Activated CD8-positive, alpha-beta T cell treated with anti-CD3 and anti-CD28 coated beads for 36 hours (primary cell): ENCODE measurements at regions of chr12 and their contacts with region 1.

Region 1: GRCh38 chr12:22100958-22101748 is 55.1 kb downstream of the CMAS start:
- DNase-seq: peak; percentile 69
- ATAC-seq: peak; percentile 77
- H3K4me3 Mint-ChIP-seq: no peak overlapping the region
- H3K27ac Mint-ChIP-seq: no peak overlapping the region
- H3K4me1 Mint-ChIP-seq: peaks cover 12% of the 10 kb centered on the region
- H3K27me3 Mint-ChIP-seq: no peaks in the 10 kb centered on the region
- CTCF ChIP-seq: no peak

Region 2: GRCh38 chr12:22014783-22015144 is 86.4 kb before region 1 on chr12:
- CTCF ChIA-PET with region 1: no interaction called
- POLR2A ChIA-PET with region 1: no interaction called
- intact Hi-C with region 1: no loop called
- DNase-seq: no peak
- ATAC-seq: no peak
- H3K4me3 Mint-ChIP-seq: no peak overlapping the region
- H3K27ac Mint-ChIP-seq: no peak overlapping the region
- H3K4me1 Mint-ChIP-seq: no peaks in the 10 kb centered on the region
- H3K27me3 Mint-ChIP-seq: peaks cover 4% of the 10 kb centered on the region
- CTCF ChIP-seq: no peak

Region 3: DNA sequence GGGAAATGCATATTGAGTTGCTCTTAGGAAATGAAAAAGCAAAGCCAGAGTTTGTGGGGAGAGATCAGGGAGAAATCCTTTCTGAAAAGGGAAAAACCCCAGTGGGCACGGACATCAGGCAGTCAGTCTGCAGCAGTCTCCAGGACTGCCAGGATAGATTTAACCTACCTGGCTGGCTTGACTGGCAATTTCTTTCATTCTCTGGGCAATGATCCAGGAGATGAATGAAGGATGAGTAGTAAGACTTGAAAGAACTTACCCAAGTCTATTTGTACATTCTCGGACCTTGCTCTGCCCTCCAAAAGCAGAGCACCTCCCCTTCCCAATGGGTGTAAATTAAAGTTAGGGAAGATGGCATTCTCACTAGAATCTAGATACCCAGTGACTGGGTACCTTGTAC is 12.3 kb before region 1 on chr12:
- CTCF ChIA-PET with region 1: interaction called, 11 read pairs
- POLR2A ChIA-PET with region 1: no interaction called
- intact Hi-C with region 1: no loop called
- DNase-seq: no peak
- ATAC-seq: no peak
- H3K4me3 Mint-ChIP-seq: no peak overlapping the region
- H3K27ac Mint-ChIP-seq: no peak overlapping the region
- H3K4me1 Mint-ChIP-seq: no peaks in the 10 kb centered on the region
- H3K27me3 Mint-ChIP-seq: no peaks in the 10 kb centered on the region
- CTCF ChIP-seq: no peak

Region 4: DNA sequence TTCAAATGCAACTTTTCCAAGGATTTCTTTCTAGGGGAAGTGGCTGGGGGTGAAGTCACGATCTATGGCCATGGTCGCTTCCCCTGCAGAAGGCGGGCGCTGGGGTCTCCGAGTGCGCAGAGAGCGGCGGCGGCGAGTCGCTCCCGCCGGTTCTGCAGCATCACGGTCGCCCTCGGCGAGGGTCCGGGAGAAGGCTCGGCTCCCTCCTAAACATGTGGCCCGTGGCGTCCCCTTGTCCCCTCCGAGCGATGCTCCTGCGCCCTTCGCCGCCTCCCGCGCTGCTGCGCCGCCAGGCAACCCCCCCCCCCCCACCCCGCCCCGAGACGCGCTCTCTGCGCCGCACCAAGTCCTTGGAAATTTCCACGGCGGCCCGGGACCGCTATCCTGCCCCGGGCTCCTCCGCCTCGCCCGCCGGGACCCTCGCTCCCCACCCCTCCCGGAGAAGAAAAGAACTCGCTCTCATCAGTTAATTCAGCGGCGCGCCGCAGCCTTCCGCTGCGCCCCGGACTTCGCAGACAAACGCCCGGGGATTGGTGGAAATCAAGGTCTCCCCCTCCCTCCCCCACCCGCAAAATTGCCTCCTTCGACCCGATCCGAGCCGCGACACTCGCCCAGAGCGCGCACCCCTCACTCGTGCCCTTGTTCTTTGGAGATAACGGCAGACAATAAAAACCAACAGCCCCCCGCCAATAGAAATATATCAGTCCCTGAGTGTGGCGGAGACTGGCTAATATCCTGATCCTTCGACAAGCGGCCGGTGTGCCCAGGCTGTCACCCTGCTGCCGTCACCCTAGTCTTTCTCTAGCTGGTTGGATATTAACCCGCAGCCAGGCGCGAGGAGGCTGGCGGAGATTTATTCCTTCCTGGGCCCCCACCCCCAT is 233.5 kb after region 1 on chr12 and contains the start of gene ST8SIA1:
- CTCF ChIA-PET with region 1: interaction called, 8 read pairs
- POLR2A ChIA-PET with region 1: no interaction called
- intact Hi-C with region 1: loop called (anchors 5 kb)
- DNase-seq: peak; percentile 60
- ATAC-seq: peak; percentile 45
- H3K4me3 Mint-ChIP-seq: peak within 1 kb of the TSS; percentile 84
- H3K27ac Mint-ChIP-seq: peak within 1 kb of the TSS; percentile 80
- H3K4me1 Mint-ChIP-seq: peaks cover 16% of the 10 kb centered on the region
- H3K27me3 Mint-ChIP-seq: peaks cover 38% of the 10 kb centered on the region
- CTCF ChIP-seq: no peak
- total RNA-seq, gene ST8SIA1: 1.5 to 2.5 TPM

Region 5: DNA sequence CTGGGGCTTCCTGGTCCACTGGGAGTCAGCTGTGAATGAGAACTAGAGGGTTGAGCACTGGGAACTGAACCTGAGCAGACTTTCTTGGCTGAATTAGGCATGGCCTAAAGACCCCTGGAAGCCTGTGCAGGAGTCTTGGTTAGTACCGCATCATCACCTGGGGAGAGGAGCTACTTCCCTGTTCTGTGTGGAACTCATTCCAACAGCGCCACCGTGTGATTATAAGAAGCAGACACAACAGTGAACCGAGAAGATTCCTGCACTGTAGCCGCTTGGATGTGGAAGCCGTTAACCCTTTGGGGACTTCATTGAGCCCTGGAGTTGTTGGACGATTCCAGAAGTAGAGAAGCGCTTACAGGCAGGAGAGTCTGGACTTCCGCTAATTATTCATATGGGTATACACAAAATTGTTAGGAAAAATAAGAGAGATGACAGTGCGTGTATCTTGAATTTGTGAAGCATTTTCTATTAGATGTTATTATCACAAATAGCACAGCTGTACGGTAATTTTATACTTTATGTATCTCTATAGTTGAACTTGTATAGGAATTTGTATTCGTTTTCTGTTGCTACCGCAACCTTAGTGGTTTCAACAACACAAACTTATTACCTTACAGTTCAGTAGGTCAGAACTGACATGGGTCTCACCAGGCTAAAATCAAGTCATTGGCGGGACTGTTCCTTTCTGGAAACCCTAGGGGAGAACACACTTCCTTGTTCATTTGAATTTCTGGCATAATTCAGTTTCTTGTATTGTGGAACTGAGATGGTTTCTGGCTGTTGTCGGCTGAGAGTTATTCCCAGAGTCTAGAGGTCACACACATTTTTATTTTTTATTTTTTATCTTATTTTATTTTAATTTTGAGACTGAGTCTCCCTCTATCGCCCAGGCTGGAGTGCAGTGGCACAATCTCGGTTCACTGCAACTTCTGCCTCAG is 342.5 kb after region 1 on chr12:
- CTCF ChIA-PET with region 1: interaction called, 10 read pairs
- POLR2A ChIA-PET with region 1: no interaction called
- intact Hi-C with region 1: loop called (anchors 5 kb)
- DNase-seq: peak; percentile 68
- ATAC-seq: peak; percentile 99
- H3K4me3 Mint-ChIP-seq: no peak overlapping the region
- H3K27ac Mint-ChIP-seq: no peak overlapping the region
- H3K4me1 Mint-ChIP-seq: no peaks in the 10 kb centered on the region
- H3K27me3 Mint-ChIP-seq: no peaks in the 10 kb centered on the region
- CTCF ChIP-seq: peak; percentile 77